ENCODE measurements at regions of chr10 and their contacts with region 1.

Region 1: DNA sequence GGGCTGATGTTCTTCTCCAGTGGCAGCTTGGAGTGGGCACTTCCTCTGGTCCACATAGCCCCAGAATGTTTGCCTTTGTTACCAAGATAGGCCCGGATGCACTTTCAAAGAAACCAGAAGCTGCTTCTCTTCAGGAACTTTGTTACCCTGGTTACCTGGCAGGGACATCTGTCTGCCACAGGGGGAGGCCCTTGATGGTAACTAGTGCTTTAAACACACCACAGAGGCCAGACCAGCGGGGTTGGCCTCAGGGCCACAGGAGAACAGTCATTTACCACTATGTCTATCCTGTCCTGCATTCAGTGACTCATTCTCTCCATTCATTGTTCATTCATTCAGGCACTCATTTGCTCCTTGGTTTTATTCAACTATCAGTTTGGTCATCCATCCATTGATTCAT is 11.9 kb upstream of the PLEKHA1 start:
- DNase-seq: no peak
- H3K4me3 ChIP-seq: no peak overlapping the region
- H3K27ac ChIP-seq: no peak overlapping the region
- H3K4me1 ChIP-seq: no peaks in the 10 kb centered on the region
- H3K27me3 ChIP-seq: no peaks in the 10 kb centered on the region
- CTCF ChIP-seq: no peak
- POLR2A ChIP-seq: no peak

Region 2: GRCh38 chr10:121771966-121772365 is 590.7 kb before region 1 on chr10:
- intact Hi-C with region 1: loop called (anchors 5 kb)
- DNase-seq: no peak
- H3K4me3 ChIP-seq: no peak overlapping the region
- H3K27ac ChIP-seq: no peak overlapping the region
- H3K4me1 ChIP-seq: no peaks in the 10 kb centered on the region
- H3K27me3 ChIP-seq: no peaks in the 10 kb centered on the region
- CTCF ChIP-seq: no peak
- POLR2A ChIP-seq: no peak

Region 3: GRCh38 chr10:122346954-122347841 is 15.4 kb before region 1 on chr10:
- intact Hi-C with region 1: loop called (anchors 2 kb)
- DNase-seq: no peak
- H3K4me3 ChIP-seq: no peak overlapping the region
- H3K27ac ChIP-seq: no peak overlapping the region
- H3K4me1 ChIP-seq: no peaks in the 10 kb centered on the region
- H3K27me3 ChIP-seq: no peaks in the 10 kb centered on the region
- CTCF ChIP-seq: no peak
- POLR2A ChIP-seq: no peak

Region 4: DNA sequence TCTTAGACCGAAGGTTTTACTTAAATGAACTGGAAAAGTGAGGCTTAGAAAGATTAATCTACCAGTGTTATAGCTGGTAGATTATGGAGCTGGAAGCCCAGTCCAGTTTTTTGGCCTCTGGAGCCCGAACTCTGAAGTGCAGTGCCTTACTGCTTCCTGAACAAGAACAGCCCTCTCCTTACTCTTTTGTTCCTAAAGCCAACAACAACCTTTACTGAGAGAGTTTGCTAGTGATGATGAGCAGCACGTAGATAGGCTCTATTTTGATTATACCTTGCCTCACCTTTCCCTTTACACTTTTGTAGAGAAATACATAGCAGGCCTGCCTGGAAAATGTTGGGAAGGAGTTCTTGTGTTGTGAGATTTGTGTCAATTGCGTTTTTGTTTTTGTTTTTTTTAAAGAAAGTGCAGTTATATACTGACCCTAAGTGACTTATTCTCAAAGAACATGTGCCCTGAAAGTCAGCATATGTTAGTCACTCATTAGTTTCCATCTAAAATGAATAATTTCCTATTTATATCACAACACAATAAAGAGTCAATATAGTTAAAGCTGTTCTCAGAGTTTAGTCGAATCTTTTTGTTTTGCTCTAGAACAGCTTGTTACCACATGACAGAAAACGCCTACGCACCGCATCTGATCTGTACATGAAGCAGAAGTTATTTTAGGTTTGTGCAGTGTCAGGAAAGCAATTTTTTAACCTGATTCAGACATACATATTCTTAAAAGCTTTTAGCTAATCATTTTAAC is 44.9 kb after region 1 on chr10:
- intact Hi-C with region 1: no loop called
- DNase-seq: no peak
- H3K4me3 ChIP-seq: no peak overlapping the region
- H3K27ac ChIP-seq: peak overlapping the region; percentile 30 to 43
- H3K4me1 ChIP-seq: no peaks in the 10 kb centered on the region
- H3K27me3 ChIP-seq: no peaks in the 10 kb centered on the region
- CTCF ChIP-seq: no peak
- POLR2A ChIP-seq: no peak

Measured in breast epithelium (tissue), 4 donors.